ENCODE measurements at regions of chr18 and their contacts with region 1.

Region 1: GRCh38 chr18:11995445-11996189 is 14.3 kb downstream of the IMPA2 start:
- DNase-seq: peak; percentile 73
- ATAC-seq: peak; percentile 90
- H3K4me3 Mint-ChIP-seq: peak overlapping the region; percentile 26
- H3K27ac Mint-ChIP-seq: peak overlapping the region; percentile 92
- H3K4me1 Mint-ChIP-seq: peaks cover 48% of the 10 kb centered on the region
- H3K27me3 Mint-ChIP-seq: no peaks in the 10 kb centered on the region
- CTCF ChIP-seq: peak; percentile 47

Region 2: GRCh38 chr18:11654736-11655605 is 340.6 kb before region 1 on chr18:
- CTCF ChIA-PET with region 1: interaction called, 22 read pairs
- POLR2A ChIA-PET with region 1: no interaction called
- DNase-seq: peak; percentile 84
- ATAC-seq: peak; percentile 89
- H3K4me3 Mint-ChIP-seq: peak overlapping the region; percentile 50
- H3K27ac Mint-ChIP-seq: no peak overlapping the region
- H3K4me1 Mint-ChIP-seq: peaks cover 6% of the 10 kb centered on the region
- H3K27me3 Mint-ChIP-seq: peaks cover 21% of the 10 kb centered on the region
- CTCF ChIP-seq: peak; percentile 89

Region 3: GRCh38 chr18:11828786-11829432 is 166.7 kb before region 1 on chr18:
- CTCF ChIA-PET with region 1: interaction called, 11 read pairs
- POLR2A ChIA-PET with region 1: no interaction called
- DNase-seq: no peak
- ATAC-seq: peak; percentile 46
- H3K4me3 Mint-ChIP-seq: no peak overlapping the region
- H3K27ac Mint-ChIP-seq: peak overlapping the region; percentile 99
- H3K4me1 Mint-ChIP-seq: peaks cover 33% of the 10 kb centered on the region
- H3K27me3 Mint-ChIP-seq: no peaks in the 10 kb centered on the region
- CTCF ChIP-seq: no peak

Region 4: DNA sequence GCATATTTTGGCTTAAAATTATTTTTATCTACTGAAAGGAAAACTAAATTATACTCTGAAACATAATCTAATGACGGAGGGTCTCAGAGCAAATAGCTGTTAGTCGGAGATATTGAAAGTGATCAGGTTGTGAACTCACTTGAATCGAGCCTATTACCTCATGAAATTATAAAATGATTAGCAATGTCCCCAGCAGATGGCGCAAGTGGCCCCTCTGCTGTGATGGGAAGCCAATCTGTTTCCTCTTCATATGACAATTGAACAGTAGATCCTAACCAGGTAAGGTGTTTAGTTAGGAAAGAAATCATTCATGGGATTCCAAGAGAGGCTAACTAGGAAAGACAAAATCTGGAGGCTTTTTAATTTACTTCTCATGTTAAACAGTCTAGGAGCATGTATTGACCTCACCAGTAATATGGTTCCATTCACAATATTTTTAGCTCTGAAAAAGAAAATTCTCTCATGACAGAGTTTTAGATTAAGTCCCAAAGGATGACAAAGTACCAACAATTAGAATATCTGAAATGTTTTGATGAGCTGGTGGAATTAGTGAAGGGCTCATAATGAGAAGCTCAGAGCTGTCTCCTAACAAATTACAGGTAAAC is 57.6 kb before region 1 on chr18:
- CTCF ChIA-PET with region 1: interaction called, 195 read pairs
- POLR2A ChIA-PET with region 1: interaction called, 15 read pairs
- DNase-seq: peak; percentile 78
- ATAC-seq: peak; percentile 71
- H3K4me3 Mint-ChIP-seq: no peak overlapping the region
- H3K27ac Mint-ChIP-seq: no peak overlapping the region
- H3K4me1 Mint-ChIP-seq: peaks cover 6% of the 10 kb centered on the region
- H3K27me3 Mint-ChIP-seq: no peaks in the 10 kb centered on the region
- CTCF ChIP-seq: peak; percentile 81

Region 5: DNA sequence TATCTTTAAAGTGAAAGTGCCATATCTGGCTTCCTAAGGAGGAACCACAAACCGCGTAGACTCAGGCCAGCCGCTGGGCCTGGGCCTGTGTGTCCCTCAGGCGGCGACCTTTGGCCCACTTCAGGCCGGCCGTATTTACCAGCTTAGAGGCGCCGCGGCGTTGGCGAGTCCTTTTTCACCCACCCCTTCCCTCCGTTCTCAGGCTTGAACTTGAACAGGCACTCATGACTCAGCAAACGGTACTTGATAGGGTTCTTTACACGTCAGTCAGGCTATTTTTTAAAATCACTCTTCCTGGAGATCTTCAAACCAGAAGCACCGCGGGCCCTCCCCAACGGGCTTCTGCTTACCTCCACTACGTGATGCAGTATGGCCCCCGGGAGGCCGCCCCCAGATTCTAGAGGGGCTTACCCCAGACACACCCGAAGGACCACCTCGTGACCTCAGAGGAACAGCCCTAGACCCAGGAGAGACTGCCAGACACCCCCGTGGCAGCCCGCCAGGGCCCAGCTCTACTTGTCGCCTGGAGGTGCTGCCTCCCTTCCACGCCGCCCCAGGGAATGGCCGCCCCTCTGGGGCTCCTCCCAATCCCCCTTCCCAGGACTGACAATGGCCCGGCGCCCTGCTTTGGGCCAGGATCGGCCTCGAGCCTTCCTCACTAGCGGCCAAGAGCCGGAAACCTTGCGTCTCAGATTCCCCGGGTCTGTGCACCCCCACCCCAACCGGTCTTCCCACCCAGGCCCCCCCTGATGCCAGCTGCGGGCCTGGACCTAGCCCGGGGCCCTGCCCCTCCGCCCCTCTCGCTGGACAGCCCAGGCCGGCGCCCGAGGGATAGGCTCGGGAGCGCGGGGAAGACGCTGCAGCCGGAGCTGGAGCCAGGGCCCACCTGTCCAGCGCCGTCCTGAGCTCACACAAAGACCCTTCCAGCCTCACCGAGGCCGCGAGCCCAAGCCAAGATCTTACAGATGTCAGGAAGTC is 48.1 kb before region 1 on chr18:
- CTCF ChIA-PET with region 1: interaction called, 34 read pairs
- POLR2A ChIA-PET with region 1: no interaction called
- DNase-seq: peak; percentile 75
- ATAC-seq: peak; percentile 79
- H3K4me3 Mint-ChIP-seq: peak overlapping the region; percentile 89
- H3K27ac Mint-ChIP-seq: peak overlapping the region; percentile 92
- H3K4me1 Mint-ChIP-seq: peaks cover 35% of the 10 kb centered on the region
- H3K27me3 Mint-ChIP-seq: no peaks in the 10 kb centered on the region
- CTCF ChIP-seq: no peak

Region 6: DNA sequence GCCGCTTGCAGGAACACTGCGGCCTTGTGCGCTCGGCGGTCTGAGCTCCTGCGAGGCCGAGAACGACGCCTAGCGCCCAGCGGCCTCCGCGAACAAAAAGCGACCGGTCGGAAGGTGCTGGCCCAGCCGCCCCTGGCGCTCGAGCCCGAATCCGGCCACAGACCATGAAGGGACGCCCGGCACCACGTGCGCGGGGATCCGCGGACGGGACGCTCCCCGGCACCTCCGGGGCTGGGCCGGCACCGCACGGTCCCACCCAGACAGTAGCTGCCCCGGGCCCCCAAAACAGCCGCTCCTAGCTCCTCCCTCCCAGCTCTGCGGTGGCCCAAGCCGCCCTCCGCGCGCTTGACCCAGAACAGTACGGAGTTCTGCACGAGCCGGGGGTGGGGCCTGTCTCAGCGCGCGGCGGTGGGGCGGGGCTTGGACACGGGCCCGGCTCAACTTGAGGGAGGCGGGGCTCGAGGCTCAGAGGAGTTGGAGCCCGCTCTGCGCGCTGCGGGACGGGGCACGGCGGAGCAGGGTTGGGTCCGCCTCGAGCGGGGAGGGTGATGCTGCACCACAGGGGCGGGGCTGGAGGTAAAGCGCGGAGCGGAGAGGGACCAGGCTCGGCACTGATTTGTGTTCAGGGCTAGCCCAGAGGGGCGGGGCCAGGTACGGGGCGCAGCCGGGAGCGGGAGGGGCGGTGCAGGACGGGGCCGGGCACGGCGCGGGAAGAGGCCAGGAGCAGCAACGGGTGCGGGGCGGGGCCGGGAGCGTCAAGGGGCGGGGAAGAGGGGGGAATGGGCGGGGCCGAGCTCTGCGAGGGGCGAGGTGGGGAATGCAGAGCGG is 14.8 kb before region 1 on chr18:
- CTCF ChIA-PET with region 1: interaction called, 33 read pairs
- POLR2A ChIA-PET with region 1: interaction called, 29 read pairs
- DNase-seq: peak; percentile 100
- ATAC-seq: peak; percentile 87
- H3K4me3 Mint-ChIP-seq: peak overlapping the region; percentile 73
- H3K27ac Mint-ChIP-seq: peak overlapping the region; percentile 97
- H3K4me1 Mint-ChIP-seq: peaks cover 52% of the 10 kb centered on the region
- H3K27me3 Mint-ChIP-seq: no peaks in the 10 kb centered on the region
- CTCF ChIP-seq: no peak

Region 7: DNA sequence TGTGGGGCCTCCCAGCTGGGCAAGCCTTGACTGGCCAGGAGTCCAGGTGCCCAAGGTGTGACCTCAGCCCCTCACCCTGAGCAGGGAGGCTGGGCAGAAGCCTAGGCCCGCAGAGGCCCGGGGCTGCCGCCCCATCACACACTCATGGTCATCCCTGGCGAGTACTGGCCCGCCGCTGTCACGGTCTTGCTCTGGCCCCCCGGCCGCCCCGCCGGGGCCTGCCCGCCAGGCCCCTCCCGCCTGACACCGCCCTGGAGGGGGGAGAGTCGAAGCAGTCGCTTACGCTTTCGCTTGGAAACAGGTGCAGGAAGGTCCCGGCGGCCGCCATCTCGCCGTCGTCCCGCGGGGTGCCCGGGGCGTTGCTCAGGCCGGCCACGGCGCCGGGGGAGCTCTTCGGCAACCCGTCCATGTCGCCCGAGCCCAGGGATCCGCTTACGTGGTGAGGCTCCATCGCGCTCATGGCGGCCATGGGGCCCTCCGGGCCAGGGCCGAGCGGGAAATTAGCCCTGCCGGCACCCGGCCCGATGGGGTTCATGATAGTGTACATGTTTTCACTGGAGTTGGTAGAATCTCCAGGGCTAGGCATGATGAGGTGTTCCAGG is 71.4 kb after region 1 on chr18:
- CTCF ChIA-PET with region 1: no interaction called
- POLR2A ChIA-PET with region 1: no interaction called
- DNase-seq: no peak
- ATAC-seq: no peak
- H3K4me3 Mint-ChIP-seq: no peak overlapping the region
- H3K27ac Mint-ChIP-seq: no peak overlapping the region
- H3K4me1 Mint-ChIP-seq: no peaks in the 10 kb centered on the region
- H3K27me3 Mint-ChIP-seq: no peaks in the 10 kb centered on the region
- CTCF ChIP-seq: no peak

Measured in WTC11 (cell line).